Right ventricle myocardium inferior (tissue), 1 donor: ENCODE measurements at regions of chr1 and their contacts with region 1.

Region 1: DNA sequence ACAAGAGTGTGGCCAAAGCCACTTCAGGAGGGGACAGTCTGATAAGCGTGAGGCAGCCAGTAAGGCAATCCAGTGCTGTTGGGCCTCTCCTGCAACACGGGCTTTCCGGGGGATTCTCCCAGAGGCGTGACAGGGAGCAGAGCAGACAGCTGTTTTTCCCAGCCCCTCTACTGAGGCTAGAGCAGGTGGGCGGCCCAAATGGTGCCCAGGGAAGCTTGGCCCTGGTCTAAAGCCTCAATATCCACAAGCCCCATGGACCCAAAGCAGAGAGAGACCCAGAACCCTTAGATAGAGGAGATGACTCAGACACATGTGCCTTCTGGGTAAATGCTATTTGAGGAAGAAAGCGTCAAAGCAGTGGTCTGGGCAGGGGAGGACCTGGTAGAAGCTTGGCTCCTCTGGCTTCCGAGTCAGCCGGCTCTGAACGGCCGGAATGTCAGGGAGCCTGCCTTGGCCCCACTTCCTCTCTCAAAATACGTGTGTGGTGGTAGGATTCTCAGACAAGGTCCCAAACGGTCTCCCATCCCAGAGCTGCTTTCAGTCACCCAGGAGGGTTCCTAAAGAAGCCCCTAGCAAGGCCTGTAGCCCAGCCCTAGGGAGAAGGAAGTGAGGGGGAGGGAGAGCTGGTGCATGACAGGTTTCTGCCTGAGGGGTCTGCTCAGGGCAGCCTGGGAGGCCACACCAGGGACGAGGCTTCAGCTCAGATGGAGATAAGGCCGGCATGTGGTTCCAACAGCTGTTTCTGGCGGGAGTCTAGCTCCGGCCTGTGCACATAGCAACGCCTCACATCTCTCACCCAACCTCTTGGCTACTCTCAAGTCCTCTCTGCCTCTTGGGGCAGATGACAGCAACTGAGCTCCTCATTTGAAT is 28.8 kb downstream of the PIK3C2B start:
- DNase-seq: no peak
- ATAC-seq: peak; percentile 60

Region 2: GRCh38 chr1:204480515-204480914 is 14.7 kb after region 1 on chr1:
- intact Hi-C with region 1: loop called (anchors 2 kb)
- DNase-seq: no peak
- ATAC-seq: no peak

Region 3: DNA sequence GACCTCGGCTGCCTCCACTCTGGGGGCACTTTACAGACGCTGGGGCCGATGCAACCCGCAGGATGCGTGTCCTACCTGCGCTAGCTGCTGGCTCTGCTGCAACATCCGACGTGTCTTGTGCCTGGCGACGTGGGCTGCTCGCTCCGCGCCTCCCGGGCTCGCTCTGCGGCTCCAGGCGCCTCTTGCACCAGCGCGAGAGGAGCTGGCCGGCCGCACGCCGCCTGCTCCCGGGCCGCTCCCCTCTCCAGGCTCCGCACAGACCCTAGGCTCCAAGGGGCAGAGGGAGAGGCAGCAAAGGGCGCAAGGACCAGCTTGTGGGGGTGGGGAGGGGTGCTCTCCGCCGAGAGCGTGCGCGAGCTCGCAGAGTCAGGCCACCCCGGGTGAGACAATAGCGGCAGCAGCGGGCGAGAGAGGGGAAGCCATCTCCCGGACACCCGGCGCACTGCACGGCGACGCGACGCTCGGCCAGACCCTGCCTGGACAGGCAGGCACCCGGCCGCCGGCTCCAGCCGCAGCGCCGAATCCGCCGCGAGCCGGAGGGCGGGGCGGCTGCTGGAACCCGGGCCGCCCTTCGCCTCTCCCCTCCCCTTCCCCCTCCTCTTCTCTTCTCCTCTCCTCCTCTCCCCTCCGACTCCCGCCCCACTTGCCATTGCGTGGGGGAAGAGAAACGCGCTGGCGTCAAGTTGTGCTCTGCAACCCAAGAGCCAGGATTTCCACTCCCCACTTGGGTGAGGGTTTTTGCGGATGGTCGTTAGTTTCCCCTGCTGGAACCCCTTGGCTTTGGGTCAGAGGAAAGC is 28.7 kb after region 1 on chr1 and contains the start of gene PIK3C2B:
- intact Hi-C with region 1: loop called (anchors 2 kb)
- DNase-seq: peak; percentile 91
- ATAC-seq: peak; percentile 97
- total RNA-seq, gene PIK3C2B: 22.7 TPM